ENCODE measurements at regions of chr18 and their contacts with region 1.

Region 1: DNA sequence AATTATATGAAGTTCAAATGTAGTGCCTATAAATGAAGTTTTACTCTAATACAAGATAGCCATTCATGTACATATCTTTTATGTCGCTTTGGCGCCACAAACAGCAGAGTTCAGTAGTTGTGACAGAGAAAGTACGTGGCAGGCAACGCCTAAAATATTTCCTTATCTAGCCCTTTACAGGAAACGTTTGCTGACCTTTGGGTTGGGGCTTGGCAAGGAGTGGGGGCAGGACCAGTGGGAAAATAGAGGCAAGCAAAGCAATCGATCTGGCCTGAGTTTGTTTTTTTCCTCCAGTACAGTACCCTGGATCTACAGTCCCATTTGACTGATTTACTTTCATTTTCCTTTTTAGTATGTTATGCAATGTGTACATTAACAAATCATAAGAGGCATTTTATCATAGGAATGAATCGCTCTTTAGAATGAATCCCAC is 13.1 kb downstream of the CCDC68 start:
- DNase-seq: peak; percentile 25
- ATAC-seq: peak; percentile 90
- H3K4me3 Mint-ChIP-seq: peak overlapping the region; percentile 77
- H3K27ac Mint-ChIP-seq: peak overlapping the region; percentile 82
- H3K4me1 Mint-ChIP-seq: peaks cover 13% of the 10 kb centered on the region
- H3K27me3 Mint-ChIP-seq: no peaks in the 10 kb centered on the region

Region 2: GRCh38 chr18:54357660-54358494 is 588.3 kb before region 1 on chr18 and contains the starts of genes C18orf54 and STARD6:
- CTCF ChIA-PET with region 1: no interaction called
- POLR2A ChIA-PET with region 1: no interaction called
- intact Hi-C with region 1: loop called in 1 of 2 experiments (anchors 1 kb)
- DNase-seq: peak; percentile 92
- ATAC-seq: peak; percentile 97
- H3K4me3 Mint-ChIP-seq: peak within 1 kb of the TSS; percentile 99
- H3K27ac Mint-ChIP-seq: peak within 1 kb of the TSS; percentile 97
- H3K4me1 Mint-ChIP-seq: peaks cover 16% of the 10 kb centered on the region
- H3K27me3 Mint-ChIP-seq: peaks cover 4% of the 10 kb centered on the region
- total RNA-seq, gene C18orf54: 8.5 to 9.9 TPM
- total RNA-seq, gene STARD6: 0.23 TPM in 1 of 2 experiments, not detected in the other

Region 3: GRCh38 chr18:54444319-54444914 is 501.7 kb before region 1 on chr18:
- CTCF ChIA-PET with region 1: interaction called, 3 read pairs
- POLR2A ChIA-PET with region 1: no interaction called
- intact Hi-C with region 1: loop called in 1 of 2 experiments (anchors 1 kb)
- DNase-seq: peak; percentile 71
- ATAC-seq: peak; percentile 68
- H3K4me3 Mint-ChIP-seq: no peak overlapping the region
- H3K27ac Mint-ChIP-seq: no peak overlapping the region
- H3K4me1 Mint-ChIP-seq: no peaks in the 10 kb centered on the region
- H3K27me3 Mint-ChIP-seq: peaks cover 10% of the 10 kb centered on the region

Region 4: DNA sequence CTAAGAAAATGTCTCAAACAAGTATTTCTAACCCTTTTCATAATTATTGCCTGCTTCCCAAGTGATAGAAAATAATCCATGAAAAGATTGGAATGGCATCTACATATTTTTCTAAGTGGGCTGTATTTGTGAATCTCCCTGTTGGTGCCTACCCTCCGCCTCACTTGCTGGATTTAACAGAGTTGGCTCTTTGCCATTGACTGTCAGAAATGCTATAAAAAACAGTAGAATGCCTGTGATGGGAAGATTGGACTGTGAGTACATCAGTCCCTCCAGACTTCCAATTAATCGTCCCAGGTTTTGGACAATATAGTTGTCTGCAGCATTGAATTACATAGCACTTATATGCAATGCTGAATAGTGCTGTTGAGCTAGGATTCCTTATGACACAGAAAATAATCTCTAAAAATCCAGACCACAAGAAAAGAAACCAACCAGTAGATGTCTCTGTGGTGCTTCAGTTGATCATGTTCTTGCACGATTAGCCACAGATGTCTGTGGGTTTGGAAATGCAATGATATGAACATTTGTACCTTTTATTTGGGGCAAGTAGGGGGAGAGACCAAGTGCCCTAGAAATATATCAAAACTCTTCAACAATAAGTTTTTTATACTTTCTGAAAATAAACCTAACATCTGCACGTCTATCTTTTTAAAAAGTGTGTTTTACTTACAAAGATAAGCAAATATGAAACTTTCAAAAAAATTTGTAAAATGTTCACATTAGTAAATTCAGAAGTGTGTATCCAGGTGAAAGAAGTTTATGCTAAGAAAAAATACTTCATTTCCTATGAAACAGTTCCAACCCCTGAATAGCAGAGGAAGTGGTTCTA is 266.6 kb before region 1 on chr18:
- CTCF ChIA-PET with region 1: interaction called, 11 read pairs
- POLR2A ChIA-PET with region 1: no interaction called
- intact Hi-C with region 1: loop called (anchors 1 kb)
- DNase-seq: no peak
- ATAC-seq: peak; percentile 61
- H3K4me3 Mint-ChIP-seq: no peak overlapping the region
- H3K27ac Mint-ChIP-seq: no peak overlapping the region
- H3K4me1 Mint-ChIP-seq: peaks cover 2% of the 10 kb centered on the region
- H3K27me3 Mint-ChIP-seq: peaks cover 2% of the 10 kb centered on the region

Region 5: DNA sequence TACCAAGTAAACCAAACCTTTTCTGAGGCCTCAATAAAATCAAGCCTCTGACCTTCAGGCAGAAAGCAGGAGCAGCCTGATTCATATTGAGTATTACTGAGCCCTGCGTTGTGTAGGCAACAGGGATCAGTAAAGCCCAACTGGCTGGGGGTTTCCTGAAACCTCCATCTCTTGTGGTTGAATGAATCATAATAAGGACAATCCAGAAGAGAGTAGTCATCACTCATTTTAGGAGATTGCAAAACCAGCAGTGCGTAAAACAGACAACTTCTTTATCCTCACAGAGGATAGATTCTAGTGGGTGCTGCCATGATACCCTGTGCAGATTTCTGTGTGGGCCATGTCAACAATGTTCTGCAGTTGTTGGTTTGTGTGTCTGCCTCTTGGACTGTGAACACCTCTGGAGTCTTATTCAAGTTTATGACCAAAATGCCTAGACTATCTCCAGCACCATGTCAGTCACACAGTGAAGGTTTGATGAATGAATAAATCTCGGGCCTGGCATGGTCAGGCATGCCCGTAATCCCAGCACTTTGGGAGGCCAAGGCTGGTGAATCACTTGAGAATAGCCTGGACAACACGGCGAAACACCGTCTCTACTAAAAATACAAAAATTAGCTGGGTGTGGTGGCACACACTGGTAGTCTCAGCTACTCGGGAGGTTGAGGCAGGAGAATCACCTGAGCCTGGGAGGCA is 169.7 kb before region 1 on chr18:
- CTCF ChIA-PET with region 1: interaction called, 4 read pairs
- POLR2A ChIA-PET with region 1: no interaction called
- intact Hi-C with region 1: loop called in 1 of 2 experiments (anchors 5 kb)
- DNase-seq: peak; percentile 67
- ATAC-seq: peak; percentile 98
- H3K4me3 Mint-ChIP-seq: no peak overlapping the region
- H3K27ac Mint-ChIP-seq: no peak overlapping the region
- H3K4me1 Mint-ChIP-seq: peaks cover 17% of the 10 kb centered on the region
- H3K27me3 Mint-ChIP-seq: no peaks in the 10 kb centered on the region

Region 6: GRCh38 chr18:54828281-54828881 is 117.8 kb before region 1 on chr18 and contains the start of gene RAB27B:
- CTCF ChIA-PET with region 1: no interaction called
- POLR2A ChIA-PET with region 1: no interaction called
- intact Hi-C with region 1: loop called in 1 of 2 experiments (anchors 1 kb)
- DNase-seq: peak; percentile 89
- ATAC-seq: peak; percentile 99
- H3K4me3 Mint-ChIP-seq: peak within 1 kb of the TSS; percentile 78
- H3K27ac Mint-ChIP-seq: peak within 1 kb of the TSS; percentile 55
- H3K4me1 Mint-ChIP-seq: peaks cover 20% of the 10 kb centered on the region
- H3K27me3 Mint-ChIP-seq: no peaks in the 10 kb centered on the region
- total RNA-seq, gene RAB27B: 0.35 to 0.53 TPM

Region 7: GRCh38 chr18:54873884-54874255 is 72.3 kb before region 1 on chr18:
- CTCF ChIA-PET with region 1: no interaction called
- POLR2A ChIA-PET with region 1: no interaction called
- intact Hi-C with region 1: no loop called
- DNase-seq: no peak
- ATAC-seq: no peak
- H3K4me3 Mint-ChIP-seq: no peak overlapping the region
- H3K27ac Mint-ChIP-seq: no peak overlapping the region
- H3K4me1 Mint-ChIP-seq: peaks cover 9% of the 10 kb centered on the region
- H3K27me3 Mint-ChIP-seq: no peaks in the 10 kb centered on the region

Region 8: GRCh38 chr18:54983041-54983686 is 37.0 kb after region 1 on chr18:
- CTCF ChIA-PET with region 1: interaction called, 3 read pairs
- POLR2A ChIA-PET with region 1: no interaction called
- intact Hi-C with region 1: loop called in 1 of 2 experiments (anchors 2 kb)
- DNase-seq: no peak
- ATAC-seq: peak; percentile 66
- H3K4me3 Mint-ChIP-seq: no peak overlapping the region
- H3K27ac Mint-ChIP-seq: no peak overlapping the region
- H3K4me1 Mint-ChIP-seq: no peaks in the 10 kb centered on the region
- H3K27me3 Mint-ChIP-seq: peaks cover 2% of the 10 kb centered on the region

Region 9: GRCh38 chr18:55001394-55002024 is 55.3 kb after region 1 on chr18:
- CTCF ChIA-PET with region 1: no interaction called
- POLR2A ChIA-PET with region 1: no interaction called
- intact Hi-C with region 1: no loop called
- DNase-seq: no peak
- ATAC-seq: no peak
- H3K4me3 Mint-ChIP-seq: no peak overlapping the region
- H3K27ac Mint-ChIP-seq: no peak overlapping the region
- H3K4me1 Mint-ChIP-seq: no peaks in the 10 kb centered on the region
- H3K27me3 Mint-ChIP-seq: no peaks in the 10 kb centered on the region